HCT116 (cell line): ENCODE measurements at regions of chr9 and their contacts with region 1.

Region 1: GRCh38 chr9:1009101-1009707 is 32.7 kb downstream of the DMRT3 start:
- DNase-seq: peak; percentile 51
- ATAC-seq: peak; percentile 97
- H3K4me3 ChIP-seq: no peak overlapping the region
- H3K27ac ChIP-seq: no peak overlapping the region
- H3K4me1 ChIP-seq: no peaks in the 10 kb centered on the region
- H3K27me3 ChIP-seq: no peaks in the 10 kb centered on the region
- CTCF ChIP-seq: peak; percentile 72 to 92 (median 91)
- POLR2A ChIP-seq: no peak
- RAD21 ChIP-seq: peak; percentile 88

Region 2: DNA sequence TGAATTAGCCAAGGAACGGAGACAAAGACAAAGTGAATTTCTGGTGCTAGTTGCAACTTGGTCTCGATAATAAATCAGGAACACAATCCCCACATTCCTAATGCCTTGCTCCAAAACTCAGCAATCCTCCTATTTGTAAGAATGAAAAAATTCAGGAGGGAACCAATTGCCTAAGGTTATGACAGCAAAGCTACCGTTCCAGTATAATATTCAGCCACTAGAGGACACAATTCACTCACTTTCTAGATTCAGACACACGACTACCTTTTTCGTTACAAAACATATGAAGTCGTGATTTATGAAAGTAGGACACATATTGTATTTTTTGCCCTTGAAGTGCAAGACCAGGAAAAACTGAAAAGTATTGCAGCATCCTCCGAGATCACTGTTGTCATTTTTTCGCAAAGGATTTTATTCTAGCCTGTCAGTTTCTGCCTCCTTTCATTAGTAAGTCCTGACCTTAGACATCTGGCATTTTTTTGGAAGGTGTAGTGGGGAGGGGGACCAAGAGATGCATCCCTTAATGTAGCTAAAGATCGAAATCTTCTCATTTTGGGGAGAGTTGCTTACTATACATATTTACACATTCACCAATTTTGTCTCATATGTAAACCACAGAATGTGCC is 661.4 kb before region 1 on chr9:
- CTCF ChIA-PET with region 1: interaction called, 7 read pairs
- POLR2A ChIA-PET with region 1: no interaction called
- RAD21 ChIA-PET with region 1: no interaction called
- intact Hi-C with region 1: loop called (anchors 2 kb)
- DNase-seq: peak; percentile 40
- ATAC-seq: peak; percentile 85
- H3K4me3 ChIP-seq: no peak overlapping the region
- H3K27ac ChIP-seq: no peak overlapping the region
- H3K4me1 ChIP-seq: no peaks in the 10 kb centered on the region
- H3K27me3 ChIP-seq: peaks cover 18% of the 10 kb centered on the region
- CTCF ChIP-seq: peak; percentile 75 to 92 (median 87)
- POLR2A ChIP-seq: no peak
- RAD21 ChIP-seq: peak; percentile 85

Region 3: DNA sequence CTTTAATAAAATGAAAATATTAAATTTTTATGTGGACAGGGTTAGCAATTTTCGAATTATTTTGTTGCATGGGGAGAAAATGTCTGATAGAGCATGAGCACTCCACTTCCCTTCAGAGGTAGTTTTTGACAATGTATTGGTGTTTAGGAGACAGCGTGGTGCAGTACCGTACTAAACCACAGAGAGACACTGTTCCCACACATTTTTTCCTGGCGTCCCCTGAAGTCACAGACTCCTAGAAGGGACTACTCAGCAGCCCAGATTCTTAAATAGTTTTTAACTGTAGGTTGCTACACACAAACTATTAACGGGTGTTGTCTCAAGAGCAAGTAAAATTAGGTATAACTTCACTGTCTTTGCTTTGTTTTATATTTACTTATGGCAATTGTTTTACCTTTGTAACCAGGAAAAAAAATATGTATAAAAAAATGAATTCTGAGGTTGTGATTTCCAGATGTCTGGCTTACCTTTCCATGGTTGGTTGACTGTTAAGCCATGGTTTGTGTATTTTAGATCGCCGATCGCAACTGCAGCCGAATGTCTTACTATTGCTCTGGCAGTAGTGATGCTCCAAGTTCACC is 623.3 kb before region 1 on chr9:
- CTCF ChIA-PET with region 1: no interaction called
- POLR2A ChIA-PET with region 1: no interaction called
- RAD21 ChIA-PET with region 1: no interaction called
- intact Hi-C with region 1: loop called (anchors 5 kb)
- DNase-seq: peak; percentile 52
- ATAC-seq: peak; percentile 98
- H3K4me3 ChIP-seq: no peak overlapping the region
- H3K27ac ChIP-seq: no peak overlapping the region
- H3K4me1 ChIP-seq: no peaks in the 10 kb centered on the region
- H3K27me3 ChIP-seq: no peaks in the 10 kb centered on the region
- CTCF ChIP-seq: peak; percentile 91
- POLR2A ChIP-seq: no peak
- RAD21 ChIP-seq: peak; percentile 93

Region 4: DNA sequence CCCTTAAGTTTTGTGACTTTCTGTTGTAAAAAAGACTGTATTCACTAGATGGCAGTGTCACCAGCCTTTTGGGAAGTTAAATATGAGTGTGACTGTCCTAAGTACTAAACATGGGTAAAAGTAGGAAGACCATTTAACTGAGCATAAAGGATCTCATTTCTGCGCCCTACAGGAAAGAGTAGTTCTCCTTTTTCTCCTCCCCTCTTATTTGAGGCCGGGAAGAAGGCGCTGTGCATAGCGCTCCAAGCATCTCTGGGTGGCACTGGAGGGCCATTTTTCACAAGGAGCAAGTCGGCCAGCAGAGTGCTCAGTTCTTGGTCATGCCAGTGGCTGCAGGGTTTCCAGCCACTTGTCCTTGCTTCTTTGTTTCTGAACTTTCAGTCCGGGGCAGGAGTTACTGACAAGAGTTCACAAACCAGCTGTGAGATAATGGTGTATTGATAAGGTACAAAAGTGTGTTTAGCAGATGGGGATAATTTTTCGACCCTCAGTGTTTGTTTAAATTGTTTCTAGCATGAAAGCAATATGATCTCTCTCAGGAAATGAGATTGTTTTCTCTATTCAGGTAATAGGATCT is 395.3 kb before region 1 on chr9:
- CTCF ChIA-PET with region 1: no interaction called
- POLR2A ChIA-PET with region 1: no interaction called
- RAD21 ChIA-PET with region 1: no interaction called
- intact Hi-C with region 1: loop called (anchors 2 kb)
- DNase-seq: peak; percentile 13
- ATAC-seq: peak; percentile 97
- H3K4me3 ChIP-seq: no peak overlapping the region
- H3K27ac ChIP-seq: no peak overlapping the region
- H3K4me1 ChIP-seq: no peaks in the 10 kb centered on the region
- H3K27me3 ChIP-seq: no peaks in the 10 kb centered on the region
- CTCF ChIP-seq: peak; percentile 40 to 97 (median 69)
- POLR2A ChIP-seq: no peak
- RAD21 ChIP-seq: peak; percentile 73

Region 5: GRCh38 chr9:763692-764524 is 245.3 kb before region 1 on chr9:
- CTCF ChIA-PET with region 1: interaction called, 4 read pairs
- POLR2A ChIA-PET with region 1: no interaction called
- RAD21 ChIA-PET with region 1: no interaction called
- intact Hi-C with region 1: loop called (anchors 5 kb)
- DNase-seq: peak; percentile 90
- ATAC-seq: peak; percentile 100
- H3K4me3 ChIP-seq: no peak overlapping the region; a peak in 1 of 4 replicates
- H3K27ac ChIP-seq: no peak overlapping the region
- H3K4me1 ChIP-seq: peaks cover 3 to 6% of the 10 kb centered on the region in 2 experiments; a peak in 3 of 4 replicates
- H3K27me3 ChIP-seq: peaks cover 4% of the 10 kb centered on the region; the same call in 1 of the 2 replicates
- CTCF ChIP-seq: peak; percentile 81 to 96 (median 93)
- POLR2A ChIP-seq: no peak
- RAD21 ChIP-seq: peak; percentile 95

Region 6: DNA sequence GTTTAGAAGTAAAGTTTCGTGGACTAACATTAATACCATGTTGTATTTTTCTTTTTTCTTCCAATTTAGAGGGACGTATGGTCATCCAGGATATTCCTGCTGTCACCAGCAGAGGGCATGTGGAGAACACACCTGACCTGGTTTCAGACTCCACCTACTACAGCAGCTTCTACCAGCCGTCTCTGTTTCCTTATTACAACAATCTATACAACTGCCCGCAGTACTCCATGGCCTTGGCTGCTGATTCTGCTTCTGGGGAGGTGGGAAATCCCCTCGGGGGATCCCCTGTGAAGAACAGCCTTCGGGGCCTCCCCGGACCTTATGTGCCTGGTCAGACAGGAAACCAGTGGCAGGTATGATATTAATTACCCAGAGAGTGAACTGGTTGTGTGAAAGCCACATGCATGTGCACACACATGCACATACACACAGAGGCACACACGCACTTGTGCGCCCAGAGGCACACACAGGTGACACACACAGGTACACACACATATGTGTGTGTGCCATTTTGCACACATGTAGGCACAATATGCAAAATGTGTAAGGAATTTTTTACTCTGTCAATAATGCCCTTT is 115.3 kb before region 1 on chr9:
- CTCF ChIA-PET with region 1: interaction called, 36 read pairs
- POLR2A ChIA-PET with region 1: no interaction called
- RAD21 ChIA-PET with region 1: interaction called in 1 of 2 experiments, 7 read pairs
- intact Hi-C with region 1: loop called (anchors 1 kb)
- DNase-seq: peak; percentile 46
- ATAC-seq: peak; percentile 94
- H3K4me3 ChIP-seq: no peak overlapping the region
- H3K27ac ChIP-seq: no peak overlapping the region
- H3K4me1 ChIP-seq: peaks cover 2 to 11% of the 10 kb centered on the region in 2 experiments; a peak in 2 of 4 replicates
- H3K27me3 ChIP-seq: no peaks in the 10 kb centered on the region
- CTCF ChIP-seq: peak; percentile 75 to 96 (median 82)
- POLR2A ChIP-seq: no peak
- RAD21 ChIP-seq: peak; percentile 84

Region 7: GRCh38 chr9:911003-911402 is 98.2 kb before region 1 on chr9:
- CTCF ChIA-PET with region 1: no interaction called
- POLR2A ChIA-PET with region 1: no interaction called
- RAD21 ChIA-PET with region 1: no interaction called
- intact Hi-C with region 1: loop called (anchors 5 kb)
- DNase-seq: no peak
- ATAC-seq: peak; percentile 87
- H3K4me3 ChIP-seq: no peak overlapping the region
- H3K27ac ChIP-seq: no peak overlapping the region
- H3K4me1 ChIP-seq: no peaks in the 10 kb centered on the region
- H3K27me3 ChIP-seq: peaks cover 23% of the 10 kb centered on the region; the same call in 1 of the 2 replicates
- CTCF ChIP-seq: peak; percentile 33 to 37 (median 36); a peak in 4 of 6 replicates
- POLR2A ChIP-seq: no peak
- RAD21 ChIP-seq: no peak; the same call in 1 of the 2 replicates

Region 8: DNA sequence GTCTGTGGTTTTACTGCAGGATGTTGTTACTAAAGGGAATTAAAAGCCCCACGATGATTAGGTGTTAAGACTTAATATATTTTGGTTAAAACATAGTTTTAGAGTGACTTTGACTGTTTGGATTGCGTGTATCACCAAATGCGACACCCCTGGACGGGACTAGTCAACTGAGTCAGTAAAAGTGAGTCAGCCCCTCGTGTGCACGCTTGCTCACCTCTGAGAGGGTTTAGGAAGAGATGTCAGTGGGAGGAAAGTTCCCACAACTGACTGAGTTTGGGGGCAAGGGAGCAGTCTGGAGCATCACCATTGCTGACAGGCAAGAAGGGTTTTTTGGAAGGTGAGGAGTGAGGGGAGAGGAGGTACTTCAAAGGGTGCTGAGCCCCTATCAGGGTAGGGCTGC is 47.2 kb before region 1 on chr9:
- CTCF ChIA-PET with region 1: no interaction called
- POLR2A ChIA-PET with region 1: no interaction called
- RAD21 ChIA-PET with region 1: no interaction called
- intact Hi-C with region 1: no loop called
- DNase-seq: no peak
- ATAC-seq: no peak
- H3K4me3 ChIP-seq: no peak overlapping the region
- H3K27ac ChIP-seq: no peak overlapping the region
- H3K4me1 ChIP-seq: no peaks in the 10 kb centered on the region
- H3K27me3 ChIP-seq: peaks cover 33% of the 10 kb centered on the region
- CTCF ChIP-seq: no peak
- POLR2A ChIP-seq: no peak
- RAD21 ChIP-seq: no peak